Activated naive CD4-positive, alpha-beta T cell treated with anti-CD3 and anti-CD28 coated beads for 36 hours (primary cell): ENCODE measurements at regions of chr10 and their contacts with region 1.

Region 1: GRCh38 chr10:114821293-114821914 is at the start of gene FHIP2A:
- DNase-seq: peak; percentile 80
- H3K4me3 Mint-ChIP-seq: peak within 1 kb of the TSS; percentile 89
- H3K27ac Mint-ChIP-seq: peak within 1 kb of the TSS; percentile 83
- H3K4me1 Mint-ChIP-seq: peaks cover 29% of the 10 kb centered on the region
- H3K27me3 Mint-ChIP-seq: no peaks in the 10 kb centered on the region
- total RNA-seq, gene FHIP2A: 8.7 to 11.4 TPM

Region 2: DNA sequence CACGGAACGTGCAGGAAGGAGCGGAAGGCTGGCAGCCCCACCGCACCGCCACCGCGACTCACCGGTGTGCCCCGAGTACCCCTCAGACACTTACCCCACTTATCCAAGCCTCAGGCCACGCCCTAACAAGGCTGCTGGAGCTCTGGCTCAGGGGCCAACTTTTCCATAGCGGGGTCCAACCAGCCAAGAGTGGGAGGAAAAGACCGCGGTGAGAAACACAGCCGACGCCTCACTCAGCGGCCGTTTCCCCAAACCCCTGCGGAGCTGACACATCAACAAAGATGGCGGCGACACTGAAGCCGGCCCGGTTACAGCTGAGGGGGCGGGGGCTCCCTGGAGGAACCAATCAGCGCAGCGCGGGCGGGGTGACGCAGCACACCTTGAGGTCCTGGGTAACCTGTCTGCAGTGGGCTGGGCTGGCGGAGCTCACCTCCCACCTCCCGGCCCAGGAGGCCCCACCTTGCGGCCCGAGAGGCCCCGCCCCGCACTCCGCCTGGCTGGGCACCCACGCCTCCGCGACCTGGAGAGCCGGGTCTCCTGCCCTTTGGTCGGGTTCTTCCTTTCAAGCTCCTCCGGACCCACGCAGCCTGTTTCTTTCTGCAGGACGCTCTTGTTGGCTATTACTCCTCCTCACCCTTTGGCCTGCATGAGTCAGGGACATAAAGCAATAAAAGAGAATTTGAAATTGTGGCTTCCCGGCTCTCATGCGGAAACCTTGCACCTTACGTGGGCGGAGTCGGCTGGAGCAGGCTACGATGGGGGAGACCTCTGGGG is 647.3 kb before region 1 on chr10 and contains the start of gene CCDC186:
- CTCF ChIA-PET with region 1: no interaction called
- intact Hi-C with region 1: loop called (anchors 1 kb)
- DNase-seq: peak; percentile 99
- H3K4me3 Mint-ChIP-seq: peak within 1 kb of the TSS; percentile 98
- H3K27ac Mint-ChIP-seq: peak within 1 kb of the TSS; percentile 93
- H3K4me1 Mint-ChIP-seq: peaks cover 27% of the 10 kb centered on the region
- H3K27me3 Mint-ChIP-seq: no peaks in the 10 kb centered on the region
- total RNA-seq, gene CCDC186: 10.3 to 13.7 TPM

Region 3: DNA sequence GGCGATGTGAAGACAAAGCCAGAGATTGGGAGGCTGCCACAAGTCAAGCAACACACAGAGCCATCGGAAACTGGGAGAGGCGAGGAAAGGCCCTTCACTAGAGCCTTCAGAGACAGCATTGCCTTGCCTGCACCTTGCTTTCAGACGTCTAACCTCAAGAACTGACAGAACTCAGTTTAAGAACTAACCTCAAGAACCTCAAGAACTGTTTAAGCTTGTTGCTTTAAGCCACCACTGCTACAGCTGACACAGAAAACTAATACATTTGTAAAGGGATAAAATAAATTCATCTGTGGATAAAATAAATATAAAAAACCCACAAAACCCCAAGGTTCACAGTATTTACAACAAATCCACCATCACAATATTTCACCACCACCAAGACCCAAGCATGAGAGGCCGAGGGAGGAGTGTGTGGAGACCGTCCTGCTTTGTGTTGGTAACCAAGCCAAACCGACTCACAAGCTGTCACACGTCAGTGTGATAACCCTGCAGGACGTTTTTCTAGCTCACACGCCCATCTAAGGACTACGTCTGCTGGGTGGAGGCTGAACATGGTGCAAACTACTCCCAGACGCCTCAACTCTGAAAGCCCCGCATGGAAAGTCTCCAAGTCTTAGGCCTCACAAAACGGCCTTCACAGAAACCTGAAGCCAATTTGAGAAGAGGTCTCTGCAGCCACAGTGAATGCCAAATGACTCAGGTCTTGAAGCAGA is 280.2 kb before region 1 on chr10:
- CTCF ChIA-PET with region 1: interaction called, 7 read pairs
- intact Hi-C with region 1: loop called (anchors 2 kb)
- DNase-seq: peak; percentile 87
- H3K4me3 Mint-ChIP-seq: peak overlapping the region; percentile 69
- H3K27ac Mint-ChIP-seq: peak overlapping the region; percentile 95
- H3K4me1 Mint-ChIP-seq: peaks cover 90% of the 10 kb centered on the region
- H3K27me3 Mint-ChIP-seq: no peaks in the 10 kb centered on the region

Region 4: DNA sequence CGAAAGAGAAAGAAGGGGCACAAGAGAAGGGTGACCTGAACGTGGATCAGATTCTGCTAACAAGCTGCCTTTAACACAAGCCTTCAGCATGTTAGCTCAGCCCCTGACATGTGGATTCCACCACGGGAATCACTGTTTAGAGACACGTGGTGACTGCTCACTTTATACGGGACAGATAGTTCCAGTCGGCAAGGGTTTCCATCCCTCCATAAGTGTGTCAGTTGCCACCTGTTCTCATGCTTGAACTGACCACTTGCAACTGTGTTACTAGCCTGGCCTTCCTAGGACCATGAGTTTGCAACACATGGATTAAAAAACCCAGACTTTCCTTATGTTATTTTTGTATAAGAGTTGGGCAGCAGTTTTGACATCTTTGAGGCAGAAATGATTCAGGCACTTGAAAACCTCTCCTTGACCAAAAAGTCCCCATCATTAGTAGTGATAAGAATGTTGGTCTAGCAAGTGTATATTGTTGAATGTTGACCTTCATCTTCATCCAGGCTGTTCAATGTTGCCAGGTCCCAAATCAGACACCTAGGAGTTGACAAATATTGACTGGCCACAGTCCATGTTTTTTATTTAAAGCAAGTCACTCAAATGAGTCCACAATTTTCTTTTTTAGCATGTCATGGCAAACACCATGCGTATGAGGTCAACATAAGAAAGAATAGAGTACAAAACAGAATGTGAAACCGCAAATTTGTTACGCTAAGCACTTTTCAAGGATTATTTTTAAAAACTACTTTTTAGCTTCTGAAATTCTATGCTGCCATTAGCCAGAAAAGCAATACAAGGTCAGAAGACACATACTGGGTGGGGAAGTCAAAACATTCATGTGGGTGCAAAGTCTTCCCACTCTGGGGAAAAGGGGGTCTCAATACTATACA is 264.9 kb before region 1 on chr10:
- CTCF ChIA-PET with region 1: no interaction called
- intact Hi-C with region 1: no loop called
- DNase-seq: no peak
- H3K4me3 Mint-ChIP-seq: no peak overlapping the region
- H3K27ac Mint-ChIP-seq: no peak overlapping the region
- H3K4me1 Mint-ChIP-seq: no peaks in the 10 kb centered on the region
- H3K27me3 Mint-ChIP-seq: no peaks in the 10 kb centered on the region

Region 5: GRCh38 chr10:114801411-114801813 is 20.0 kb before region 1 on chr10:
- CTCF ChIA-PET with region 1: no interaction called
- intact Hi-C with region 1: loop called (anchors 1 kb)
- DNase-seq: peak; percentile 19
- H3K4me3 Mint-ChIP-seq: no peak overlapping the region
- H3K27ac Mint-ChIP-seq: no peak overlapping the region
- H3K4me1 Mint-ChIP-seq: peaks cover 10% of the 10 kb centered on the region
- H3K27me3 Mint-ChIP-seq: no peaks in the 10 kb centered on the region

Region 6: DNA sequence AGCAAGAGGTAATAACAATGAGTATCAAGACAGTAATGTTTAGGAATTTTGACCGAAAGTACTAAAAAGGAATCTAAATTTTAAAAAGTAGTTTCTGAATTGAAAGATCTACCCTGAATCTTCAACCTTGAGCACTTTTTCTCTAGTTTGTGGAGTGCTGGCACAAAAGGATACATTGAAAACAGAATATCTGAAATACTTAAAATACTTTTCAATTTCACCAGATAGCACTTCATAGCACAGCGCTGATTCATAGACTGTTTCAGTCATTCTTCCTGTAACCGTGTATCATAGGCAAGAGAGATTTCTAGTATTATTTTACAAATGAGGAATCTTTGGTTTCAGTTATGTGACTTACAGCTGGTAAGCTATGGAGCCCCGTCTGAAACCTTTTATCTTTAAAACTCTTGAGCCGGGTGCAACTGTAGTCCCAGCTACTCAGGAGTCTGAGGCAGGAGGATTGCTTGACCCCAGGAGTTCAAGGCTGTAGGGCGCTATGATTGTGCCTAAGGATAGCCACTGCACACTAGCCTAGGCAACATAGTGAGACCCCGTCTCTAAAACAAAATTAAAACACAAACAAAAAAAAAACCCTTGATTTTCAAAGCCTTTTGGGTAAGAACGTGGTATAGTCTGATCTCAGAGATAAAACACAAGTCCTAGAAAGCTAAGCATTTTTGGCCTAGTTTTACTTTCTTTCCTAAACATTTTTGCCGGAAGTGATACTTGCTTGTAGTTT is 35.3 kb after region 1 on chr10:
- CTCF ChIA-PET with region 1: interaction called, 10 read pairs
- intact Hi-C with region 1: loop called (anchors 1 kb)
- DNase-seq: no peak
- H3K4me3 Mint-ChIP-seq: no peak overlapping the region
- H3K27ac Mint-ChIP-seq: no peak overlapping the region
- H3K4me1 Mint-ChIP-seq: peaks cover 15% of the 10 kb centered on the region
- H3K27me3 Mint-ChIP-seq: no peaks in the 10 kb centered on the region

Region 7: DNA sequence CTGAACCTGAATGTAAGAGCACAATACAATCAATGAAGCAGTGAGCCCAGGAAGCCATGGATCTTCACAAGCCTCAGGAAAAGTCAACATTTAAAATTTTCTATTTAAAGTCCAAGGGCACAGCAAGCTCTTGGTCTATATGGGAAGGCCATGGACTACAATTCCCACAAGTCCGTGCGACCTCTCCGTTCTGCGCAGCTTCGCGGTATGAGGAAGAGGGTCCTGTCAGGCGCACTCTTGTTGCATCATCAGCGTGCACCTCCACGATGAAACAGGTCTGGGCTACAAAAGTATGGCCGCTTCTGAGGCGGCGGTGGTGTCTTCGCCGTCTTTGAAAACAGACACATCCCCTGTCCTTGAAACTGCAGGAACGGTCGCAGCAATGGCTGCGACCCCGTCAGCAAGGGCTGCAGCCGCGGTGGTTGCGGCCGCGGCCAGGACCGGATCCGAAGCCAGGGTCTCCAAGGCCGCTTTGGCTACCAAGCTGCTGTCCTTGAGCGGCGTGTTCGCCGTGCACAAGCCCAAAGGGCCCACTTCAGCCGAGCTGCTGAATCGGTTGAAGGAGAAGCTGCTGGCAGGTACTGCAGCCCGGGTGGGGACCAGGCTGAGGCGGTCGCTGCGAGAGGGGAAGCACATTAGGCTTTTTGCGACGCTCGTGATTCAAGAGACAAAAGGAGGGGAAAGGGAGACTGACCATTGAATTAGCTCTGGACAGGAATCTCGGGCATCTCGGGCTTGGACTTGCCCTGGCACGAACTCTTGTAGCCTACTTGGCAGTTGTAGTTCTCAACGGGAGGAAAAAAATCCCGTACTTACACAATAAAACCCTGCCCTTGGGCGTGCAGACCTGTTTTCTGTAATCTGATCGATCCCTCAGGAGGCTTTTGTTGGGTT is 116.8 kb after region 1 on chr10 and contains the start of gene TRUB1:
- CTCF ChIA-PET with region 1: interaction called, 5 read pairs
- intact Hi-C with region 1: loop called (anchors 1 kb)
- DNase-seq: peak; percentile 97
- H3K4me3 Mint-ChIP-seq: peak within 1 kb of the TSS; percentile 95
- H3K27ac Mint-ChIP-seq: peak within 1 kb of the TSS; percentile 82
- H3K4me1 Mint-ChIP-seq: peaks cover 29% of the 10 kb centered on the region
- H3K27me3 Mint-ChIP-seq: no peaks in the 10 kb centered on the region
- total RNA-seq, gene TRUB1: 15.2 to 15.3 TPM

Region 8: DNA sequence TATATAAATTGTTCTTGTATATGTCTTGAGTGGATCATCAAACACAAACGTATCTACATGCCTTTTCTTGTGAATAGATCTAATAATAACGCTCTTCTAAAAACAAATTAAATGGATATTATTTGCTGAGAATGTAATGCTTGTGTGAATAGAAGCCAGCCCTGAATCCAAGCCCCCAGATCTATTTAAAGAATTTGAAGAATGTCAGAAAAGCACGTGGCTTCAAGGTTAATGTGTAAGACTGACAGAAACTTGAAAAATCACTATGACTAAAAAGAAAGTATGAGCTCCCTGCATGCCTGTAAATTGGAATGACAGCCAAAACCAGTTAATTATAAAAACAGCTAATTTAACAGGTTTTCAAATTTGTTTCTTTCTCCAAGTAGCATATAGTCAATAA is 228.6 kb after region 1 on chr10:
- CTCF ChIA-PET with region 1: no interaction called
- intact Hi-C with region 1: no loop called
- DNase-seq: no peak
- H3K4me3 Mint-ChIP-seq: no peak overlapping the region
- H3K27ac Mint-ChIP-seq: no peak overlapping the region
- H3K4me1 Mint-ChIP-seq: no peaks in the 10 kb centered on the region
- H3K27me3 Mint-ChIP-seq: no peaks in the 10 kb centered on the region

Region 9: GRCh38 chr10:115092555-115093285 is 271.3 kb after region 1 on chr10:
- CTCF ChIA-PET with region 1: no interaction called
- intact Hi-C with region 1: loop called (anchors 5 kb)
- DNase-seq: peak; percentile 12
- H3K4me3 Mint-ChIP-seq: peak overlapping the region; percentile 68
- H3K27ac Mint-ChIP-seq: no peak overlapping the region
- H3K4me1 Mint-ChIP-seq: peaks cover 5% of the 10 kb centered on the region
- H3K27me3 Mint-ChIP-seq: peaks cover 41% of the 10 kb centered on the region

Region 10: DNA sequence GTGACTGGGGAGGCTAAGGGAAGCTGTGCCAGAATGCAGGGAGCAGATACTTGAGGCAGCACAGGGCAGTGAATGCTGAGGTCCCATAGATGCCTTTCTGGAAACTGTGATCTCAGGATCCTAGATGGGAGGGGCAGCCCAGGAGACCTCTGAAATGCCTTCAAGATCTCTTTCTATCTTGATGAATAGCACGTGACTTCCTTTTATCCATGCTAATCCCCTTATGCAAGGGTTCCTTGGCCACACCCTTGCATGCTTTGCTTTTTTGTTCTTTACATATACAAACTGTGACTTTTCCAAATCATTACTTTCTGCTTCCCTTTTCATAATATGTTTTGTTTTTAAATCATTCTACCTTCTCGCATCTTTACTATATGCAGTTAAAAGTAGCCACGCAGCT is 286.4 kb after region 1 on chr10:
- CTCF ChIA-PET with region 1: no interaction called
- intact Hi-C with region 1: no loop called
- DNase-seq: no peak
- H3K4me3 Mint-ChIP-seq: no peak overlapping the region
- H3K27ac Mint-ChIP-seq: no peak overlapping the region
- H3K4me1 Mint-ChIP-seq: no peaks in the 10 kb centered on the region
- H3K27me3 Mint-ChIP-seq: peaks cover 21% of the 10 kb centered on the region

Region 11: GRCh38 chr10:116178086-116178611 is 1356.7 kb after region 1 on chr10:
- CTCF ChIA-PET with region 1: no interaction called
- intact Hi-C with region 1: no loop called
- DNase-seq: no peak
- H3K4me3 Mint-ChIP-seq: no peak overlapping the region
- H3K27ac Mint-ChIP-seq: no peak overlapping the region
- H3K4me1 Mint-ChIP-seq: no peaks in the 10 kb centered on the region
- H3K27me3 Mint-ChIP-seq: no peaks in the 10 kb centered on the region